ENCODE measurements at regions of chr12 and their contacts with region 1.

Region 1: DNA sequence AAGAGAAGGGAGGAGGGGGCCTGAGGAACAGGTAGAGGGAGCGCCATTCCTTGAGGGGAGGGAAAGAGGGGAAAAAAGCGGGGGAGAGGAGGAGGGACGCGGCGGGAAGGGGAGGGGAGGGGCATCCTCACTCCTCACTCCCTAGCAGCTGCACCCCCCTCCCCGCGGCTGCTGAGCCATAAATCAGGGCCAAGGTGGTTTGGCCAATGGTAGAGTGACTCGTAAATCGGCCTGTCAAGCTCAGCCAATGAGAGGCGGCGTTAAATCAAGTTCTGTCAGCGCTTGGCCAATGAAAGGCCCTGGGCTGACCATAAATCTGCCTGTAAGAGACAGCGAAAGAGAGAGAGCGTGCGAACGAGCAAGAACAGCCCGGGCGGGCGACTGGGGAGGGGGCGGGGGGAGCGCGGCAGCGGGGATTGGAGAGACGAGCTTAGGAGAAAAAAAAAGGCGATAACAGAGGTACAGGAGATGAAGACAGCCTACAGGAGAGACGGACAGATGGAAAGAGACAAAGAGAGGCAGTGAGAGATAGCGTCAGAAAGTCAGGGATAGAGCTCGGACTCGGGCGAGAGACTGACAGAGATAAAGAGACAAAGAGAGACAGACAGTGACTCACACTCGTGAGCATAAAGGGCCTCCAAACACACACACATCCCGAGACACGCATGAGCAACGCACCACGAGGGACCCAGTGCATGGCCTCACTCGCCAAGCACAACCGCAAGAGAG is 5.1 kb downstream of the GPR84 start:
- DNase-seq: peak; percentile 98
- H3K4me3 ChIP-seq: peak overlapping the region; percentile 43 to 73 (median 53)
- H3K27ac ChIP-seq: peak overlapping the region; percentile 81
- H3K4me1 ChIP-seq: peaks cover 24% of the 10 kb centered on the region
- H3K27me3 ChIP-seq: no peaks in the 10 kb centered on the region
- CTCF ChIP-seq: no peak

Region 2: DNA sequence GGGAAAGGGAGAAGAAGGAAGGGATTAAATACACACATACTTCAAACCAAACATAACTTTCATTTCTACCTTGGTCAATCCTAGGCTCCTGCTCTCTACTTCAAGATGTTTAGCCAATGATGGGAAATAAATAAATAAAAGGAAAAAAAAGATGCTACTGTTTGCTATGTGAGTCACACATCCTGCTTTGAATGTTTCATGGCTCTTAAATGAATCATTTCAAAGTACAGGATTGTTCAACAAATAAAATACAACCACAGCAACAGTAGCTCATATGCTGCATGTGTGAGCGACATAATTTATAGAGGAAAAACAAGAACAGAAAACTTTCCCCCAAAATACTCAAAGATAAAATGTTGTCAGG is 797.6 kb before region 1 on chr12:
- CTCF ChIA-PET with region 1: no interaction called
- dilution Hi-C with region 1: no loop called
- in situ Hi-C with region 1: no loop called
- intact Hi-C with region 1: no loop called
- DNase-seq: peak; percentile 81
- H3K4me3 ChIP-seq: no peak overlapping the region
- H3K27ac ChIP-seq: peak overlapping the region; percentile 61
- H3K4me1 ChIP-seq: peaks cover 23% of the 10 kb centered on the region
- H3K27me3 ChIP-seq: no peaks in the 10 kb centered on the region
- CTCF ChIP-seq: no peak

Region 3: GRCh38 chr12:54214553-54215406 is 144.4 kb before region 1 on chr12:
- CTCF ChIA-PET with region 1: interaction called, 4 read pairs
- dilution Hi-C with region 1: loop called (anchors 5 kb)
- in situ Hi-C with region 1: loop called in 1 of 2 experiments (anchors 5 kb)
- intact Hi-C with region 1: loop called (anchors 1 kb)
- DNase-seq: peak; percentile 72
- H3K4me3 ChIP-seq: peak overlapping the region; percentile 19 to 29 (median 20)
- H3K27ac ChIP-seq: no peak overlapping the region
- H3K4me1 ChIP-seq: peaks cover 14% of the 10 kb centered on the region
- H3K27me3 ChIP-seq: no peaks in the 10 kb centered on the region
- CTCF ChIP-seq: peak; percentile 91 to 98

Region 4: DNA sequence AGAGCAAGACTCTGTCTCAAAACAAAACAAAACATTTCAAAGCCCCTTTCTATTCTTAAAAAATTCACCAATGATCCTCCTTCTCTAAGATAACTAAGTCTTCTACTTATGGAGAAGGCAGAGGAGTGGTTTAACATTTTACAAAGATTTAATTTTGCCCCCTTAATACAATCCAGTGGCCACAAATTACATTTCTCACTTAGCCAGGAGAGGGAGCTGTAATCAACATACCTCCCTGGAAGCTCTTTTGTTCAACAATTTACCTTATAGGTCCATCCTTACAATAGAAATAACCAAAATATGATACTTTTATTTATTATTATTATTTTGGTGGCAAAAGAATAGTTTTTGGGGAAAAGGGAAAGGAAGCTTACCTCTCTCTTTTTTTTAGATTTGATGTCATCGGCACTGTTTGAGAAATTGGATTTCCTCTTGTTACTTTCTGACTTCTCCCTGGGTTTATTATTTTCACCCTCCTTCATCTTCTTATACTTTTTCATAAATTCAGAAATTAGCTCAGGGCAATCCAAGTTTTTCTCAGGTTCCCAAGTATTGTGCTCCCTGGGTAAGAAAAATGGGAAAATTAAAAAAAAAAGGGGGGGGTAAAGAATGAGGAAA is 107.4 kb before region 1 on chr12:
- CTCF ChIA-PET with region 1: no interaction called
- dilution Hi-C with region 1: no loop called
- in situ Hi-C with region 1: no loop called
- intact Hi-C with region 1: loop called (anchors 1 kb)
- DNase-seq: no peak
- H3K4me3 ChIP-seq: no peak overlapping the region
- H3K27ac ChIP-seq: no peak overlapping the region
- H3K4me1 ChIP-seq: no peaks in the 10 kb centered on the region
- H3K27me3 ChIP-seq: no peaks in the 10 kb centered on the region
- CTCF ChIP-seq: peak; percentile 68 to 76

Region 5: GRCh38 chr12:54265364-54265812 is 93.8 kb before region 1 on chr12:
- CTCF ChIA-PET with region 1: interaction called, 19 read pairs
- dilution Hi-C with region 1: no loop called
- in situ Hi-C with region 1: no loop called
- intact Hi-C with region 1: no loop called
- DNase-seq: no peak
- H3K4me3 ChIP-seq: no peak overlapping the region
- H3K27ac ChIP-seq: no peak overlapping the region
- H3K4me1 ChIP-seq: peaks cover 14% of the 10 kb centered on the region
- H3K27me3 ChIP-seq: no peaks in the 10 kb centered on the region
- CTCF ChIP-seq: no peak

Region 6: DNA sequence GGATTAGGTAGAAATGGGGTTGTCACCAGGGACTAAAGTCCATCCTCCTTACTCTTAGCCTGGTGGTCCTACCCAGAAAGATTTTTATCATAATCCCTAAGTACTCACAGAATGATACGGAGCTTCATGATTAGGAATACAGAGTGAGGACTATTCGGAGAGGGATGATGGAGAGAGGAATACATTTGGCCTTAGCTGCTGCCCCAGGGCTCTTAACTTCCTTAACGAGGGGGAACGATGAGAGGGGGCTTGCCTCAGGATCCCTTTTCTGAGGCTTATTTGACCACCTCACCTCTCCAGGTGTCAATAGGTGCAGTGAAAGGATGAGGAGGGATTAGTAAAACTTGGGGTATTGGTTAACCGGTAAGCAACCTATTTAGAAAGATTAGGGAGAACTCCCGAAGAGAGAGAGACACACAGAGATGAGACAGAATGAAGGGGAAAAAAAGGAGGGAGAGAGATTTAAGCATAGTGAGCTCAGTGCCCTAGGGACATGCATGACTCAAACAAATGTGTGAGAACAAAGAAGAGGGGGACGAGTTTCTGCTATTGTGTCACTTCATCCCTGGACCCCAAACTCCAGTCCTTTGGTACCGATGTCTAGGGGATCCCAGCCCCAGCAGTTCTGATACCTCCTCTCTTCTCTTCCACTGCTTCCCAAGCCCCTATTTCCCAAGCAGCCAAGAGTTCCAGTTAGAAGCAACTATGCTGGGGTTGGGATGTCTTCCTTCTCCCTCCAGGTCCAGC is 59.5 kb before region 1 on chr12:
- CTCF ChIA-PET with region 1: no interaction called
- dilution Hi-C with region 1: loop called (anchors 5 kb)
- in situ Hi-C with region 1: loop called in 1 of 2 experiments (anchors 5 kb)
- intact Hi-C with region 1: loop called (anchors 1 kb)
- DNase-seq: no peak
- H3K4me3 ChIP-seq: no peak overlapping the region
- H3K27ac ChIP-seq: no peak overlapping the region
- H3K4me1 ChIP-seq: peaks cover 40% of the 10 kb centered on the region
- H3K27me3 ChIP-seq: no peaks in the 10 kb centered on the region
- CTCF ChIP-seq: no peak